ENCODE measurements at regions of chrX and their contacts with region 1.

Region 1: DNA sequence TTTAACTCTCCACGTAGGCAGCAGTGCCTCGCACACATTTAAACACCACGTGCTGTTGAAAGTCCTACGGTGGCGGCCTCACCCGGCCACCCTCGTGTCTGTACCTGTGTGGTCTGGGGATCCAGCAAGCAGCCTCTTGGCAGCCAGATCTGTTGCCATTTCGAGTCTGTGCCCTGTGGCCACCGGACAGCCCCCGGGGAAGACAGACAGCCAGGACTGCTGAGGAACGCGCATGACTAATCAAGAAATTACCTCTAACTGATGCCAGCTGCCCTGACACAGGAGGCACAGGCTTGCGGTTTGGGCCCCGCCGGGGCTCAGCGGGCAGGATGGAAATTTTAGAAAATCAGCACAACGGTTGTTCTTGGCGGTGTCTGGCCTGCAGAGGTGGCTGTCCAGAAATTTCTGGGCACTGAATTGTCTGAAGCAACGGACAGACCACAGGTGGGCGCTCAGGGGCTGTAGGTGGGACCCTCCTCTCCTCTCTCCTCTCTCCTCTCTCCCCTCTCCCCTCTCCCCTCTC is 15.6 kb upstream of the ASMTL start:
- DNase-seq: peak in 2 of 3 donors; percentile 34 to 80
- ATAC-seq: peak; percentile 68
- H3K4me3 ChIP-seq: no peak overlapping the region
- H3K4me1 ChIP-seq: no peaks in the 10 kb centered on the region
- CTCF ChIP-seq: no peak

Region 2: DNA sequence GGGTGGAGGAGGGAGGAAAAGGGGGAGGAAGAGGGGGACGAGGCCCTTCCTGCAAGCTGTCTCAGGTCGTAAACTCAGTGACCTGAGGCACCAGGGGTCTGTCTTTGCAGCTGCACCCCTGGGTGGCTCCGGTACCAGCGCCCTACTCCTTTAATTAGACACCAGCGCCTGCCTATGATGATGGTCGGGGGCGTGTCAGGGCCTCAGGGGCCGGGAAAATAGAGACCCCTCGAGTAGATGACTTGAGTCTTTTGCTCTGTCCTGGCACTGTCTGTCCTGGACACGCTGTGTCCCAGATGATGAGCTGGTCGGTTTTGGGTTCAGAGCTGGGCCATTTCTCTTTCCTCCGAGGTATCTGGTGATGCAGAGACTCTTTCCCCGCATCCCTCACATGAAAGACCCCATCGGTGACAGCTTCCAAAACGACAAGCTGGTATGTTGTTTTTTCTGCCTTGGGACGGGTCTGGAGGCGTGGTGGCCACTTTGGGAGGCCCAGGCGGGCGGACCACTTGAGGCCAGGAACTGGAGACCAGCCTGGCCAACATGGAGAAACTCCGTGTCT is 87.6 kb before region 1 on chrX:
- intact Hi-C with region 1: no loop called
- DNase-seq: peak; percentile 10 to 51 (median 38)
- ATAC-seq: peak; percentile 12
- H3K4me3 ChIP-seq: no peak overlapping the region
- H3K4me1 ChIP-seq: peaks cover 6% of the 10 kb centered on the region
- CTCF ChIP-seq: no peak

Region 3: DNA sequence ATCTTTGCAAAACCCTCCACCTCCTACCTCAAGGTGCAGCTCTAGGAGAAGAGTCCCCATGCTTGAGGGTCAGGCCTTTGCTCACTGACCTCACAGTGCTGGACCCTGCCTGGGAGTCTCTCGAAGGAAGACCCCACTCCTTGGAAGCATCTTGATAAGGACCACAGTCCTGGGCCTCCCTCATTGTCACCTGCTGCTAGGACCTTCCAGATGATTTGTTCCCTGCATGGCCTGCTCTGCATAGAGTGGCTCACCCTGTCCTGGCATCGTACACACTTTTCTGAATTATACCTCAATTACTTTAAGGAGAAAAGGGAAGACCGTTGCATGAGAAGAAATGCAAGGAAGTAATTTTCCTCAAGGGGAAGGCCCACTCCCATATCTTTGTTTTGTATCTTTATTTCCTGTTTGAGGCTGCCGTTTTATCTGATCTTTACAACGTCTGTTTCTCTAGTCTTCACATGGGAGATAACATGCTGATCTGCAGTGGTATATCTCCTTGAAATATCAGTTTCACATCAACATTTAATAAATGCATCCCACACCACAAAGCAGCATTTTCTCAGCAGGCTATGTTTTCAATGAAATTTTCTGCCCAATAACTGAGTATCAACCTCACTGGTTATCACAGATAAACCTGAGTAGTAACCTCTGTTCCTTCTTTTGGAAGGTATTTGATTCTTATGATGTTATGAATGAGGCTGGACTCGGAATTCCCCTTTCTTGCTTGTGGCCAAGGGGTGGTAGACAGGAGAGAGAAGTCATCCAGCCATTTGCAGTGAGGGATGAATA is 108.1 kb after region 1 on chrX:
- intact Hi-C with region 1: loop called in 1 of 2 experiments (anchors 10 kb)
- DNase-seq: no peak
- ATAC-seq: no peak
- H3K4me3 ChIP-seq: no peak overlapping the region
- H3K4me1 ChIP-seq: no peaks in the 10 kb centered on the region
- CTCF ChIP-seq: no peak